Sciatic nerve (tissue), 2 donors: ENCODE measurements at regions of chr17 and their contacts with region 1.

Region 1: DNA sequence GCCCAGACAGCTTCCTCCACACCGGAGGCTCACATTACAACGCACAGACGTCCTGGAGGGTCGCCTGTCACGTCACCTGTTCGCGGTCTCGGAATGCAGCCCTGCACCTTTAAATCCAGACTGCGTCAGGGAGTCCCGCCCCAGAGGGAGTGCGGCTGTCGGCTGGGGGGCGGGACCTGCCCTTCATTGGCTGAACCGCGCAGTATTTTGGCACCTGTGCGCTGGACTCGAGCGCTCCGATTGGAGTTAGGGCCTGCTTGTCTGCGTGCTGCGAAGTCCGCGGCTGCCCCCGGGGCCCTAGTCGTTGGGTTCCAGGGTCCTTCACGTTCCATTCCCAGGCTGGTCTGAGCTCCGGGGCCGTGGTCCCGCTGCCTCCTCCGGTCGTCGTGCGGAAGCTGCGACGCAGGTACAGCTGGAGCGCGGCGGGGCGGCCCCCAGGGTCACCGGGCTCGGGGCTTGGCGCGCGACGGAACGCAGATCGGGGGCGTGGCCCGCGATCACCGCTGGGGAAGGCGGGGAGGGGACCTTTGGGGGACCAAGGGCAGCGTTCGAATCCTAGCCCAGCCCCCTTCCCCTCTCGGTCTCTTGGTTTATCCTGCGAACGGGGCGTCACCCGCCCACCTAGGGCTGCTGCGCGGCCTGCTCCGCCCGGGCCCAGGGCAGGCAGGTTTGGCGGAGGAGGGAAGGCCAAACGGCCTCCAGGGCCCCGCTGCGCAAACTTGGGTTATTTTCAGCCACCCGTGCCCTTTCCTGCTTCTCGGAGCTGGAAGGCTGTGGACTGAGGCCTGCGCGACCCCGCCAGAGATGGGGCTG is at the start of gene MIEF2:
- DNase-seq: peak; percentile 97
- ATAC-seq: peak; percentile 96
- total RNA-seq, gene MIEF2: 15.5 TPM

Region 2: DNA sequence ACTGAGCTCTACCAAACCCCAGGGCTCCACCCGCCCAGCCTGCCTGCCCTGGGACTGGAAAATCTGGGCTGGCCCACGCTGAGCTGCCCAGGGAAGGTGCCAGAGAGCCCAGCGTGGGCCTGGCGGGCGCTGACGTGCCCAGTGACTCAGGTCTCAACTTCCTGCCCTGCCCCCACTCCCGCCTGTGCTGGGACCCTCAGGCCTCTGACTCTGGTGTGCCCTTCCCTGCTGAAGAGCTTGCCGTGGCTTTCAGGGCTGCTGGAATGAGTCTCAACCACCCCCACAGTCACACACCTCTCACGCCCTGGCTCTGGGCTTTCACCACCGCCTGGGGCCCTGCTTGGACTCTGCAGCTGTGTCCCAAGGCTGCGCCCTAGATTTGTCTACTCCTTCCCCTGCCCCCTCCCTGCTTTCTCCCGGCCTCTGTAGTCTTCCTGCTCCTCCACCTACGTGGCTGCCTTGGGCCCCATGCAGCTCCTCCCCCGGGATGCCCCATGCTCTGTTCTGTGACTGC is 24.7 kb before region 1 on chr17:
- intact Hi-C with region 1: no loop called
- DNase-seq: no peak
- ATAC-seq: no peak

Region 3: DNA sequence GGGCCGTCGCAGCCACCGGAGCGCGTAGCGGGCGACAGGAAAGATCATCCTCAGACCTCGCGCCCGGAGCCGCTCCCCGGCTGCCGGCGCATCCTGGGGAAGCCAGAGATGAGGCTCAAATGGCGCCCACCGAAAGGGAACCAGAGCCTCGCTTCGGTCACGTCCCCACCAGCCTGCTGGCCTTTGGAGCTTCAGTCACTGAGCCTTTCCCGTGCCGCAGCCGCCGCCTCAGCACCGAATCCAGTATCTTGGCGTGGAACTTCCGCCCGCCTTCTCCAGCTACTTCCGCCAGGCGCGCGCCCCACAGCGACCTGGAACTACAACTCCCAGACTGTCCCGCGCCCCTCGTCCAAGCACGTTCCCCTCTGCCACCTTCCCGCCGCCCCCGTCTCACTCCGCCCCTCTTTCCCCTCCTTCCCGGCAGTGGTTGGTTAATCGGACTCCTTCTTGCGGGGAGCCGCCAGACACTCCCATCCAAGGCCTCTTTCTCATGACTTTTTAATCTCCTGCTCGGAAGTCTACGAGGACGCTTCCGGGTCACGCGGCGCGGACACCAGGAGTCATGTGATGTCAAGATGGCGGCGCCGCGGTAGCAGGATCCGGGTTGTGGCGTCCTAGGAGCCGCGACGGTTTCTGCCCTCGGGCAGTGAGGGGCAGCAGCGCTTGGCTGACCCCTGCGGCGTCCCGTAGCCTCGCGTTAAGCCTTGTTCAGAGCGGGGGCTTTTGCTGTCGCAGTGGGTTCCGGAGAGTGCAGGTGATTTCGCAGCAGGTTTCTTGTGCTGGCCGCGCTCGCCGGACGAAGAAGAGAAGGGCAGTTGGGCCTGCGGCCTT is 54.4 kb after region 1 on chr17 and contains the starts of genes SMCR8 and TOP3A:
- intact Hi-C with region 1: loop called (anchors 10 kb)
- DNase-seq: peak; percentile 98
- ATAC-seq: peak; percentile 99
- total RNA-seq, gene SMCR8: 13.4 TPM
- total RNA-seq, gene TOP3A: 37.0 TPM